ENCODE measurements at regions of chr1 and their contacts with region 1.

Region 1: DNA sequence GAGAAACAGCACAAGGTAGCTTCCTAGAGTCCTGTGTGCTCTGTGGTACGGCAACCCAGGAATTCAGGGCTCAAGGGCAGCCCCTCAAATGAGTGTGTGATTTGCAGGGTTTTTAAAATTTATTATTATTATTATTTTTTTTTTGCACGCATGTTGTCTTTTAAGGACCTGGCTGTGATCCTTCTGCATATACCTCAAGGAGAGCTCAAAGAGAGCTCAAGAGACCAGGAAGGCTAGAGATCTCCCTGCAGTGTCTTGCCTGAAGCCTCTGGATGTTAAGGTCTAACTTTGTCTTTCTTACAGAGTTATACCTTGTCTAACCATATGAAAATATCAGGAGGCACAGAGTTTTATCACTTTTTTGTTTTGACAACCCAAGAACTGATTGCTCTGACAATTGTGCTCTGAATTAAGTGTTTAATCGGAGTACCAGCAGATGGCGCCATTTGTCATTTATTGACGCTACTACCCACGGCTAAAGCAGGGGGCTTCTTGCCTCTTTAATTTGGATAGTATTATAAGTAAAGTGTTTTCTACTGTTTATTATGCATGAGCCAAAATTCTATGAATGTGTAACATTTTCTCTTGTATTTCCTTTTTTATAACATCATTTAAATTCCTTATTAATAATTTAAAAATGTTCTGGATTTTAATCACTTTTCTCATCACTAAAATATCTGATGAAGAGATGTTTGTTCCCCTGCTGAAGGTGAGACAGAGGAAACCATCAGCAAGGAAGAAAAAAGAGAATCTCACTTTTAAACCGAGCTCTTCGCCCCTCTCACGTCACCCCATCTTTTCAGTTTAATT is 35.8 kb upstream of the LMO4 start:
- DNase-seq: peak in 1 of 3 donors; percentile 56
- ATAC-seq: peak; percentile 57 to 72 (median 70)
- H3K4me3 ChIP-seq: no peak overlapping the region
- H3K27ac ChIP-seq: no peak overlapping the region
- H3K4me1 ChIP-seq: no peaks in the 10 kb centered on the region
- H3K27me3 ChIP-seq: no peaks in the 10 kb centered on the region
- CTCF ChIP-seq: peak; percentile 71 to 79 (median 76)
- POLR2A ChIP-seq: no peak

Region 2: DNA sequence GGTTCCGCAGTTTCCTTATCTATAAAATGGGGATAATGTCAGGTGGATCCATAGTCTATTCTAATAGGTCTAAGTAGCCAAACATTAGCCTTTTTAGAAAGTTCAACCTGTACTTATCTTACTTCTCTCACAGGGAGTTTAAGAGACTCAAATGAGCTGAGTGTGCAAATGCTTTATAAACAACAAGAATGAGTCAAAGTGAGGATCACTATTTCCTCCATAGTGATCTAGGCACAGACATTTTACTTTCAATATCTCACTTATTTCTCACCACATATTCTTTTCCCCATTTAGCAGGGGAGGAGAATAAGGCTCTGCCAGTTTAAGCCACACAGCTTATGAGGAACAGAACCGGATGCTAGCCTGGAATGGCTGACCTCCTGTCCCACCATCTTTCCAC is 56.3 kb before region 1 on chr1:
- intact Hi-C with region 1: no loop called
- DNase-seq: no peak
- ATAC-seq: no peak
- H3K4me3 ChIP-seq: no peak overlapping the region
- H3K27ac ChIP-seq: no peak overlapping the region
- H3K4me1 ChIP-seq: no peaks in the 10 kb centered on the region
- H3K27me3 ChIP-seq: no peaks in the 10 kb centered on the region
- CTCF ChIP-seq: no peak
- POLR2A ChIP-seq: no peak

Region 3: GRCh38 chr1:87953732-87954344 is 660.9 kb after region 1 on chr1:
- intact Hi-C with region 1: loop called in 1 of 2 experiments (anchors 10 kb)
- DNase-seq: peak in 2 of 3 donors; percentile 47 to 64
- ATAC-seq: peak; percentile 92 to 96 (median 92)
- H3K4me3 ChIP-seq: no peak overlapping the region
- H3K27ac ChIP-seq: no peak overlapping the region
- H3K4me1 ChIP-seq: no peaks in the 10 kb centered on the region
- H3K27me3 ChIP-seq: no peaks in the 10 kb centered on the region
- CTCF ChIP-seq: peak; percentile 74 to 89 (median 84)
- POLR2A ChIP-seq: no peak